ENCODE measurements at regions of chr19 and their contacts with region 1.

Region 1: GRCh38 chr19:11814029-11814699 is at the start of gene ZNF440:
- DNase-seq: peak; percentile 95
- ATAC-seq: peak; percentile 100
- H3K4me3 Mint-ChIP-seq: peak within 1 kb of the TSS; percentile 89
- H3K27ac Mint-ChIP-seq: peak within 1 kb of the TSS; percentile 73
- H3K4me1 Mint-ChIP-seq: peaks cover 20% of the 10 kb centered on the region
- H3K27me3 Mint-ChIP-seq: no peaks in the 10 kb centered on the region
- total RNA-seq, gene ZNF440: 7.0 to 7.7 TPM

Region 2: GRCh38 chr19:11014403-11014911 is 799.7 kb before region 1 on chr19:
- CTCF ChIA-PET with region 1: no interaction called
- POLR2A ChIA-PET with region 1: no interaction called
- intact Hi-C with region 1: no loop called
- DNase-seq: no peak
- ATAC-seq: no peak
- H3K4me3 Mint-ChIP-seq: no peak overlapping the region
- H3K27ac Mint-ChIP-seq: no peak overlapping the region
- H3K4me1 Mint-ChIP-seq: no peaks in the 10 kb centered on the region
- H3K27me3 Mint-ChIP-seq: no peaks in the 10 kb centered on the region

Region 3: GRCh38 chr19:11673608-11674041 is 140.5 kb before region 1 on chr19:
- CTCF ChIA-PET with region 1: interaction called, 3 read pairs
- POLR2A ChIA-PET with region 1: no interaction called
- intact Hi-C with region 1: loop called in 1 of 2 experiments (anchors 1 kb)
- DNase-seq: peak; percentile 62
- ATAC-seq: peak; percentile 73
- H3K4me3 Mint-ChIP-seq: peak overlapping the region; percentile 14
- H3K27ac Mint-ChIP-seq: no peak overlapping the region
- H3K4me1 Mint-ChIP-seq: peaks cover 3% of the 10 kb centered on the region
- H3K27me3 Mint-ChIP-seq: peaks cover 23% of the 10 kb centered on the region

Region 4: DNA sequence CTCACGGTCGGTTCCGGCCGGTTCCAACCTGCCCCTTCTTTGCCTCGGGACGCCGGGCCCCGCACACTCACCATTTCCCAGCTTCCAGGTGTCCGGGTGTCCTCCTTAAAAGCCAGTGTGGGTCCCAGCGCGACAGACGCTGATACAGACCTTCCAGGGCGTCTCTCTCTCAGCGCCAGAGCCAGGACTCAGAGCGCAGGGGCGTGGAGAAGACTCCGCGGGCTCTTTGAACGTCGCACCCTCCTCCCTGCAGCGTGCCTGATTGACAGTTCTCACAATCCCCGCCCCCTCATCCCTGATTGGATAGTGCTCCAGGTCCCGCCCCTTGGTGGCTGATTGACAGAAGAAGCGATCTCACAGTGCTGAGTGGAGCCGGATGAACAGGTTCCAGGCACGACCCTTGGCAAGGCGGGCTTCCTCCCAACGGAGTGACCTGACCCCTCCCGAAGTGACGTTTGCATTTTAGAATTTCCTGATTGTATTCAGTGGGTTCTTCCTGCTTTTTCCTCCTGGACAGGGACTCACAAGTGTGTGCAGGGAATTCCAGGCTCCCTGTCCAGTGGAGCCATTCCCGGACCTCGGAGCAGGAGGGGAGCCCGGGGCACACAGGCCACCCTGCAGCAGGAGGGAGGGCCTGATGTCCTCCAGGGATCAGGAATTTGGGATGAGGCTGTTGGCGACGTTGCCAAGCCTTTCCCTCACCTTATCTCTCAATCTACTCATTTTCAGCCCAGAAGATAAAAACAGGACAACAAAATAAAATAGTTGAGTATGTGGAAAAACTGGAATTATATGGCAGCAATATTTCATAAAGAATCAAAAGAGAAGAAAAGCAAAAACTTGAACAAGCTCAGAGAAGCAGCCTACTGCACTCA is 75.2 kb before region 1 on chr19 and contains the start of gene ZNF823:
- CTCF ChIA-PET with region 1: no interaction called
- POLR2A ChIA-PET with region 1: no interaction called
- intact Hi-C with region 1: loop called (anchors 1 to 2 kb)
- DNase-seq: peak; percentile 99
- ATAC-seq: peak; percentile 100
- H3K4me3 Mint-ChIP-seq: peak within 1 kb of the TSS; percentile 99
- H3K27ac Mint-ChIP-seq: peak within 1 kb of the TSS; percentile 92
- H3K4me1 Mint-ChIP-seq: peaks cover 16% of the 10 kb centered on the region
- H3K27me3 Mint-ChIP-seq: no peaks in the 10 kb centered on the region
- total RNA-seq, gene ZNF823: 2.9 to 3.0 TPM

Region 5: DNA sequence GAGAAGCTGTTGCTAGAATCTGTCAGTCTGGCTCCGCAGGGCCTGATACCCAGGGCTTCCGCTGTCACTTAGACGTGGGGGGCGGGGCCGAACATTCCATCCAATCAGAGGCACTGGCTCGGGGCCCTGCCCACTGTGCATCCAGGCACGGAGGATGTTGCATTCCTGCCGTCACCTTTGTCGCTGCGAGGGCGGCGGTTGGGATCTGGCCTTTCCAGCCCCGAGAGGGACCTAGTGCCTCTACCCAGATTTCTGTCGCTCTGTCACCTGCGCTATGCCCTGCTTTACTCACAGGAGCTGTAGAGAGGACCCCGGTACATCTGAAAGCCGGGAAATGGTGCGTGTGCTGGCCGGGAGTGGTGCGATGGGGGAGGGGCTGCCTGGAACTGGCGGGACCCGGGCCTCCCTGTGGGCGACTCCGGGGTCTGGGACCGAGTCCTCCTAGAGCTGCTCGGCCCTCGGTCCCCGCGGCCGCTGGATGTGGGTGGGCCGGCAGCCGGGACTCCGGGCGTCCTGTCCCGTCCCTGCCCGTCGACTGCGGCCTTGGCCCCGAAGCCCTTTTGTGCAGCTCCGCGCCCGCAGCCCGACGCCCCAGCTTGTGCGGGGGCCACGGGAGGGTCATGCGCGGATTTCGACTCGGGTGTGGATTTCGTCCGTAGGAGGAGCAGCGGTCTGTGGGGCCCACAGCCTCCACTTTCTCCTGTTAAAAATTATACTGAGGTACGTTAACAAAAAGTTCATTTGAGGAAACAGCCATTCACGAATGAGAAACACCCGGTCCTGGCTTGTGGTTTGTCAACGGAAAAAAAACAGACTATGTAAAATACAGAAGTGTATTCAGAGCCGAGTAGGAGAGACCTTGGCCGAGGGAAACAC is 34.7 kb after region 1 on chr19 and contains the start of gene ZNF439:
- CTCF ChIA-PET with region 1: no interaction called
- POLR2A ChIA-PET with region 1: no interaction called
- intact Hi-C with region 1: loop called (anchors 1 to 5 kb)
- DNase-seq: peak; percentile 96
- ATAC-seq: peak; percentile 100
- H3K4me3 Mint-ChIP-seq: peak within 1 kb of the TSS; percentile 80
- H3K27ac Mint-ChIP-seq: peak within 1 kb of the TSS; percentile 85
- H3K4me1 Mint-ChIP-seq: peaks cover 23% of the 10 kb centered on the region
- H3K27me3 Mint-ChIP-seq: no peaks in the 10 kb centered on the region
- total RNA-seq, gene ZNF439: 10.4 to 11.4 TPM

Region 6: GRCh38 chr19:12666265-12667048 is 852.3 kb after region 1 on chr19 and contains the starts of genes MAN2B1 and WDR83:
- CTCF ChIA-PET with region 1: no interaction called
- POLR2A ChIA-PET with region 1: no interaction called
- intact Hi-C with region 1: loop called in 1 of 2 experiments (anchors 2 kb)
- DNase-seq: peak; percentile 90
- ATAC-seq: peak; percentile 73
- H3K4me3 Mint-ChIP-seq: peak within 1 kb of the TSS; percentile 86
- H3K27ac Mint-ChIP-seq: peak within 1 kb of the TSS; percentile 83
- H3K4me1 Mint-ChIP-seq: peaks cover 43% of the 10 kb centered on the region
- H3K27me3 Mint-ChIP-seq: no peaks in the 10 kb centered on the region
- total RNA-seq, gene MAN2B1: 118 to 154 TPM
- total RNA-seq, gene WDR83: 13.5 to 19.5 TPM